Activated CD4-positive, alpha-beta T cell treated with anti-CD3 and anti-CD28 coated beads, Interleukin-2, amount 10 ng/mL, durations not matched to agents 7 days and 5 days (primary cell): ENCODE measurements at regions of chr1 and their contacts with region 1.

Region 1: GRCh38 chr1:110524311-110525251 is 5.6 kb upstream of the KCNA10 start:
- DNase-seq: peak; percentile 66
- H3K4me3 Mint-ChIP-seq: no peak overlapping the region
- H3K27ac Mint-ChIP-seq: no peak overlapping the region
- H3K4me1 Mint-ChIP-seq: peaks cover 3% of the 10 kb centered on the region
- H3K27me3 Mint-ChIP-seq: peaks cover 38% of the 10 kb centered on the region

Region 2: DNA sequence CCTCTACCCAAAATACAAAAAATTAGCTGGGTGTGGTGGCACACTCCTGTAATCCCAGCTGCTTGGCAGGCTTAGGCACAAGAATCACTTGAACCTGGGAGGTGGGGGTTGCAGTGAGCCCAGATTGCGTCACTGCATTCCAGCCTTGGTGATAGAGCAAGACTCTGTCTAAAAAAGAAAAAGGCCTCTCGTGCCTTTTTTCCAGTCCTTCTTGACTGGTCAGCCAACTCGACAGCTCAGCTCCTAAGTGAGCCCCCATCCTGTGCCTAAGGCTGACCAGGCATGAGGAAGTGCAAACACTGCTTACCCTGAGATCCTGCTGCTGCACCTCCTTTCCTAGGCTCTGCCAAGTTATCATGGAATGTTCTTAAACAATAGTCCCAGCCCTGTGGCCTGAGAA is 83.7 kb before region 1 on chr1:
- CTCF ChIA-PET with region 1: no interaction called
- POLR2A ChIA-PET with region 1: no interaction called
- DNase-seq: no peak
- H3K4me3 Mint-ChIP-seq: no peak overlapping the region
- H3K27ac Mint-ChIP-seq: no peak overlapping the region
- H3K4me1 Mint-ChIP-seq: no peaks in the 10 kb centered on the region
- H3K27me3 Mint-ChIP-seq: peaks cover 2% of the 10 kb centered on the region

Region 3: GRCh38 chr1:110460253-110461220 is 64.0 kb before region 1 on chr1:
- CTCF ChIA-PET with region 1: no interaction called
- POLR2A ChIA-PET with region 1: no interaction called
- DNase-seq: peak; percentile 88
- H3K4me3 Mint-ChIP-seq: no peak overlapping the region
- H3K27ac Mint-ChIP-seq: no peak overlapping the region
- H3K4me1 Mint-ChIP-seq: no peaks in the 10 kb centered on the region
- H3K27me3 Mint-ChIP-seq: no peaks in the 10 kb centered on the region

Region 4: GRCh38 chr1:110513511-110513910 is 11.1 kb before region 1 on chr1:
- CTCF ChIA-PET with region 1: interaction called, 13 read pairs
- POLR2A ChIA-PET with region 1: no interaction called
- DNase-seq: no peak
- H3K4me3 Mint-ChIP-seq: no peak overlapping the region
- H3K27ac Mint-ChIP-seq: no peak overlapping the region
- H3K4me1 Mint-ChIP-seq: no peaks in the 10 kb centered on the region
- H3K27me3 Mint-ChIP-seq: peaks cover 2% of the 10 kb centered on the region

Region 5: GRCh38 chr1:110780600-110781484 is 256.3 kb after region 1 on chr1:
- CTCF ChIA-PET with region 1: interaction called, 18 read pairs
- POLR2A ChIA-PET with region 1: no interaction called
- DNase-seq: peak; percentile 84
- H3K4me3 Mint-ChIP-seq: no peak overlapping the region
- H3K27ac Mint-ChIP-seq: no peak overlapping the region
- H3K4me1 Mint-ChIP-seq: peaks cover 39% of the 10 kb centered on the region
- H3K27me3 Mint-ChIP-seq: peaks cover 6% of the 10 kb centered on the region

Region 6: DNA sequence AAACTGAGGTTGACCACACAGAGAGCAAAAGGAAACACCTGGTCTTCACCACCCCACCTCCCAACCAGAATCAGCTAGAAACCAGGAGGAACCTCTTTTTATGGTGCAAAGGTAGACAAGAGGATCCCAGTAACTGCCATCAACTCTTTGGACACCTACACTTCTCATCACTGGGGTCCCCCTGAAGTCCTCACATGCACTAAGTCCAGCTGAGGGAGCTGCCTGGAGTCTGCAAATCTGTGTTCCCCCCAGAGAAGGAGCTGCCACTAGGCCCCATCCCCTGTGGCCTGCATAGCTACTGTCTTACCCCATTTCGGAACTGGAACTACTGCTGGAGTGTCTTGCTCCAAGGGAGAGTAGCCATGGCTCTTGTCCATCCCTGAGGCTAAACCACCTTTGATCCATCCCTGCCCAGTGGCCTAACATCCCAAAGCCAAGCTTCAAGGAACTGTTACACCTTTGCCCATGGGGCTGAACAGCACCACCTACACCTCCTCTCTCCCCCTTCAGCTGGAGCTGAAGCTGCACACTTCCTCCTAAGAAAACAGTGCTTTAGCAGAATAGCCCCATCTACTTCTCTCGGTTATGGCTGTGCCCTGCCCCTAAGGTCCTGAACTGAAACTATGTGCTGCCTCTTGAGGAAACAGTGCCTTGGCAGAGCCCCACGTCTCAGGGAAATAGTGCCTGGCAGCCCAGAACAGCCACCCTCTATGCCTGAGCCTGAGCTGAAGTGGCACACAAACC is 262.9 kb after region 1 on chr1:
- CTCF ChIA-PET with region 1: interaction called, 11 read pairs
- POLR2A ChIA-PET with region 1: no interaction called
- DNase-seq: peak; percentile 83
- H3K4me3 Mint-ChIP-seq: peak overlapping the region; percentile 62
- H3K27ac Mint-ChIP-seq: peak overlapping the region; percentile 93
- H3K4me1 Mint-ChIP-seq: peaks cover 78% of the 10 kb centered on the region
- H3K27me3 Mint-ChIP-seq: no peaks in the 10 kb centered on the region